ENCODE measurements at regions of chr10 and their contacts with region 1.

Region 1: GRCh38 chr10:99854860-99855259 is 72.4 kb downstream of the ABCC2 start:
- DNase-seq: peak; percentile 41
- ATAC-seq: peak; percentile 10
- H3K4me3 ChIP-seq: no peak overlapping the region
- H3K27ac ChIP-seq: no peak overlapping the region
- H3K4me1 ChIP-seq: peaks cover 28% of the 10 kb centered on the region
- H3K27me3 ChIP-seq: no peaks in the 10 kb centered on the region
- CTCF ChIP-seq: peak; percentile 59
- EP300 ChIP-seq: no peak
- POLR2A ChIP-seq: peak in 1 of 2 experiments; percentile 30; a peak in 1 of 4 replicates
- RAD21 ChIP-seq: 0 out of 2 replicates have a peak, but pooled peaks have one; percentile 21

Region 2: DNA sequence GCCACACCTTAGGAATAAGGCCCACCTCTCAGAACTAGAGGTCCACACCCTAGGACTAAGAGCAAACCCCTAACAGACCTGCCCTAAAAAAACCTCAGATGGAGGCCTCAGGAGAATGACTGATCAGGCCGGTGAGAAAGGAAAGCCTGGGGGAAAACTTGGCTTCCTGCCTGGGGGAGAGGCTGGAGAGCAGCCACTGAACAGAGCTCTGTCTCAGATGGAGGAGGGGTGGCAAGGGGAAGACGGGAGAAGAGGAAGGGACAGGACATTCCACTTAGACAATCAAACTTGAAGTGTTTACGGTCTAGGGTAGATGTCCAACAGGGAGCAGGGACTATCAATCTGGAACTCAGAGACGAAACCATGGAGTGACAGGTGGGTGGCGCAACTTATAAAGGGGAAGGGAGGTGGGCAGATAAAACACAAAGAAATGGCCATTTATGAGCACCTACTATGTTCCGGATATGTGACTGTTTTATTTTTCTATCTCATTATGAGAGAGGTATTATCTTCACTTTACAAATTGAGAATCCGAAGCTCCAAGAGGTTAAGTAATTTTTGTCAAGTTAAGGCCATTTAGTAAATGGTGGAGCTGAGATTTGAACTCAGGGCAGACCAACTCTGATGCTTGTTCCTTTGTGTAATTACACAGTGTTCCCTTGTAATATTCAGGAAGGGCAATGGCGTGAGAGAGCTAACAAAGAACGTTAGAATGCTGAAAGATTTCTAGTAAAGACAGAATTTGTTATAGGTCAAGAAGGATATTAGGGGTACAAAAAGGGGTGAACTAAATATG is 72.3 kb after region 1 on chr10:
- CTCF ChIA-PET with region 1: no interaction called
- POLR2A ChIA-PET with region 1: interaction called, 11 read pairs
- in situ Hi-C with region 1: no loop called
- intact Hi-C with region 1: loop called (anchors 5 kb)
- DNase-seq: peak; percentile 15
- ATAC-seq: no peak
- H3K4me3 ChIP-seq: peak overlapping the region; percentile 65 to 69 (median 68)
- H3K27ac ChIP-seq: peak overlapping the region; percentile 71
- H3K4me1 ChIP-seq: peaks cover 79% of the 10 kb centered on the region
- H3K27me3 ChIP-seq: no peaks in the 10 kb centered on the region; a peak in 1 of 5 replicates
- CTCF ChIP-seq: no peak
- EP300 ChIP-seq: no peak
- POLR2A ChIP-seq: no peak
- RAD21 ChIP-seq: no peak

Region 3: GRCh38 chr10:100046021-100046486 is 191.2 kb after region 1 on chr10:
- CTCF ChIA-PET with region 1: interaction called, 9 read pairs
- POLR2A ChIA-PET with region 1: no interaction called
- in situ Hi-C with region 1: no loop called
- intact Hi-C with region 1: loop called (anchors 2 kb)
- DNase-seq: peak; percentile 50
- ATAC-seq: peak; percentile 93
- H3K4me3 ChIP-seq: no peak overlapping the region
- H3K27ac ChIP-seq: no peak overlapping the region
- H3K4me1 ChIP-seq: peaks cover 7% of the 10 kb centered on the region; the same call in 1 of the 2 replicates
- H3K27me3 ChIP-seq: no peaks in the 10 kb centered on the region
- CTCF ChIP-seq: peak; percentile 92
- EP300 ChIP-seq: no peak
- POLR2A ChIP-seq: no peak
- RAD21 ChIP-seq: peak; percentile 83